GM18951 (cell line): ENCODE measurements at regions of chr21 and their contacts with region 1.

Region 1: GRCh38 chr21:42145569-42146272 is 73.2 kb upstream of the ABCG1 start:
- POLR2A ChIP-seq: no peak

Region 2: DNA sequence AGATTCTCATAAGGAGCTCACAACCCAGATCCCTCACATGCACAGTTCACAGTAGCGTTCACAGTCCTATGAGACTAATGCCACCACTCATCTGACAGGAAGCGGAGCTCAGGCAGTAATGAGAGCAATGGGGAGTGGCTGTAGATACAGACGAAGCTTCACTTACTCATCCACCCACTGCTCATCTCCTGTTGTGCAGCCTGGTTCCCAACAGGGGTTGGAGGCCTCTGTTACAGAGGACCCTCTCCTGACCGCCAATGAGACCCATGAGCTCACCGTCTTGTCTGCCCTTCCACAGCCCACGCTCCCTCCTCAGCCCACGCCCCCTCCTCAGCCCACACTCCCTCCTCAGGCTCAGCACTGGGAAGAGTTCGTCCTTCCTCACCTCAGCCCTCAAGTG is 310.7 kb after region 1 on chr21:
- in situ Hi-C with region 1: loop called (anchors 10 kb)
- POLR2A ChIP-seq: no peak